ENCODE measurements at regions of chr1 and their contacts with region 1.

Region 1: GRCh38 chr1:226121587-226122400 is 59.3 kb downstream of the H3-3A start:
- DNase-seq: peak; percentile 65 to 87 (median 77)
- ATAC-seq: peak; percentile 82
- H3K4me3 ChIP-seq: peak overlapping the region; percentile 28
- H3K4me3 Mint-ChIP-seq: peak overlapping the region; percentile 68 to 94 (median 82)
- H3K27ac ChIP-seq: peak overlapping the region; percentile 75
- H3K27ac Mint-ChIP-seq: peak overlapping the region in 4 of 9 donors; percentile 51 to 95 (median 77)
- H3K4me1 ChIP-seq: peaks cover 9 to 12% of the 10 kb centered on the region in 2 donors
- H3K4me1 Mint-ChIP-seq: peaks cover 15 to 40% (median 27%) of the 10 kb centered on the region in 7 donors
- H3K27me3 ChIP-seq: no peaks in the 10 kb centered on the region
- H3K27me3 Mint-ChIP-seq: peaks cover 0 to 10% (median 0%) of the 10 kb centered on the region in 5 donors

Region 2: GRCh38 chr1:225467193-225468020 is 654.4 kb before region 1 on chr1:
- CTCF ChIA-PET with region 1: no interaction called
- POLR2A ChIA-PET with region 1: interaction called, 3 read pairs
- intact Hi-C with region 1: loop called in 1 of 2 experiments (anchors 5 kb)
- DNase-seq: peak; percentile 57 to 85 (median 81)
- ATAC-seq: peak; percentile 91
- H3K4me3 ChIP-seq: peak overlapping the region; percentile 94
- H3K4me3 Mint-ChIP-seq: peak overlapping the region; percentile 81 to 94 (median 92)
- H3K27ac ChIP-seq: peak overlapping the region; percentile 85
- H3K27ac Mint-ChIP-seq: peak overlapping the region; percentile 89 to 98 (median 98)
- H3K4me1 ChIP-seq: peaks cover 22 to 40% of the 10 kb centered on the region in 2 donors
- H3K4me1 Mint-ChIP-seq: peaks cover 33 to 65% (median 48%) of the 10 kb centered on the region in 7 donors
- H3K27me3 ChIP-seq: no peaks in the 10 kb centered on the region
- H3K27me3 Mint-ChIP-seq: no peaks in the 10 kb centered on the region

Region 3: DNA sequence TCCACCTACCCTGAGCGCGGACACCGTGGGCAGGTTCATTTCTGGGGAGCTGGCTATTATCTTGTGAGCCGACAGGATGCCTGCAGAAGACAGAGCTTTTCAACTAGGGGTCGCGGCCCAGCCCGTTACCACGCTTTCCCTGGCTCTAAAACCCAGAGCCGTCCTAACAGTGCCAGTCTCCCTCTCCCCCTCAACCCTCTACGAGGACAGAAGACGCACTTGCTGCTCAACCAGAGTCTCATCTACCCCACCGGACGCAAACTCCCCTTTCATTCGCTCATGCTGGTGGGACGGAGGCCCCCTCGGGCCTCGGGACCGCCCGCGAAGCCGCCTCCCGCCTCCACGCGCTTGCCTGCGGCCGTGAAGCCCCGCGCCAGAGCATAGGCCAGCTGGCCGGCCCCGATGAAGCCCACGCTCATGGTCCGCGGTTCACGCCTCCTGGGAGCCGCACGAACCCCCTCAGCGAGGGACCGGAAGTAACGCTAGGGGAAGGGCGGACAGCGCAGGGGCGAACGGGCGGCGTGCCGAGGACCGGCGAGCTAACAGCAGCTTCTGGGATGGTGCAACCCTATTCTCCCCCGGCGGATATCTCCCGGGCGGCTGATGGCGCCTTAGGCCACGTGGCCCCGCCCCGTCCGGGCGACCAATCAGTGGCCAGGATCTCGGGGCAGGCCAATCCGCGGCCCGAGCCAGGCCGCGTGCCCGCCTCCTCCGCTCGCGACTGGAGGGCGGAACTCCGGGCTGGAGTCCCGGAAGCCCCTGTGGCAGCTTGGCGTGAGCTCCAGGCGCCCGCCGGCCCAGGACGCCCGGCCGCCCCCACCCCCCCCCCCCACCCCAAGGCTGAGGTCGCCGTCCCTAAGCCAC is 197.9 kb before region 1 on chr1 and contains the start of gene PYCR2:
- CTCF ChIA-PET with region 1: no interaction called
- POLR2A ChIA-PET with region 1: no interaction called
- intact Hi-C with region 1: loop called in 1 of 2 experiments (anchors 10 kb)
- DNase-seq: peak; percentile 92 to 97 (median 94)
- ATAC-seq: peak; percentile 99
- H3K4me3 ChIP-seq: peak within 1 kb of the TSS; percentile 100
- H3K4me3 Mint-ChIP-seq: peak within 1 kb of the TSS; percentile 86 to 98 (median 94)
- H3K27ac ChIP-seq: peak within 1 kb of the TSS; percentile 95
- H3K27ac Mint-ChIP-seq: peak within 1 kb of the TSS; percentile 90 to 98 (median 95)
- H3K4me1 ChIP-seq: peaks cover 11 to 65% of the 10 kb centered on the region in 2 donors
- H3K4me1 Mint-ChIP-seq: peaks cover 45 to 75% (median 60%) of the 10 kb centered on the region in 7 donors
- H3K27me3 ChIP-seq: no peaks in the 10 kb centered on the region
- H3K27me3 Mint-ChIP-seq: no peaks in the 10 kb centered on the region
- total RNA-seq, gene PYCR2: 46.4 to 137 (median 109) TPM

Region 4: GRCh38 chr1:226109829-226110248 is 12.0 kb before region 1 on chr1:
- CTCF ChIA-PET with region 1: interaction called, 9 read pairs
- POLR2A ChIA-PET with region 1: interaction called, 4 read pairs
- intact Hi-C with region 1: loop called (anchors 1 kb)
- DNase-seq: peak; percentile 44 to 84 (median 59)
- ATAC-seq: peak; percentile 92
- H3K4me3 ChIP-seq: peak overlapping the region; percentile 59
- H3K4me3 Mint-ChIP-seq: peak overlapping the region; percentile 88 to 96 (median 92)
- H3K27ac ChIP-seq: peak overlapping the region; percentile 67
- H3K27ac Mint-ChIP-seq: peak overlapping the region; percentile 85 to 93 (median 89)
- H3K4me1 ChIP-seq: no peaks in the 10 kb centered on the region
- H3K4me1 Mint-ChIP-seq: peaks cover 7 to 26% (median 21%) of the 10 kb centered on the region in 7 donors
- H3K27me3 ChIP-seq: no peaks in the 10 kb centered on the region
- H3K27me3 Mint-ChIP-seq: peaks cover 0 to 6% (median 0%) of the 10 kb centered on the region in 5 donors

Region 5: DNA sequence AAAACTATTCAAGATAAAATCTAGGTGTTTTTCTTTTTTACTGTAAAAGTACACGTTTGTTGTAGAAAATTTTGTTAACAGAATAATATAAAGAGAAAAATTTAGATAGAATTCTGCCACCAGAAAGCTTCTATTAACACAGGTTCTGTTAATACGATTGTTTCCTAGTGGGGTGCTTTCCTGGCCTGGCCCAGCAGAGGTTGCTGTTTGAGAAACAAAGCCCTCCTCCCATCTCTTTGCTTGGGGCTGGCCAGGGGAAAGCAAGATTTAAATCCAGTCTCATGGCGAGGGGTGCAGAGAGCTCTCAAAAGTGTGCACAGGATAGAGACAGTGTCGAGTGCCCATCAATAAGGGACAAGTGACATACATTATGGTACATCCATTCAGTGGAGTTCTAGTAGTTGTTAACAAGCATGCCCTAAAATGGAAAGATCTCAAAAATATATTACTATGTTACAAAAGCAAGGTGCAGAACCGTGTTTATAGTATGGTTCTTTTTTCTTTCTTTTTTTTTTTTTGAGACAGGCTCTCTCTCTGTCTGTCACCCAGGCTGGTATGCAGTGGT is 79.3 kb after region 1 on chr1:
- CTCF ChIA-PET with region 1: interaction called, 89 read pairs
- POLR2A ChIA-PET with region 1: interaction called, 4 read pairs
- intact Hi-C with region 1: loop called (anchors 1 kb)
- DNase-seq: no peak
- ATAC-seq: no peak
- H3K4me3 ChIP-seq: no peak overlapping the region
- H3K4me3 Mint-ChIP-seq: no peak overlapping the region
- H3K27ac ChIP-seq: no peak overlapping the region
- H3K27ac Mint-ChIP-seq: no peak overlapping the region
- H3K4me1 ChIP-seq: no peaks in the 10 kb centered on the region
- H3K4me1 Mint-ChIP-seq: peaks cover 0 to 5% (median 0%) of the 10 kb centered on the region in 7 donors
- H3K27me3 ChIP-seq: no peaks in the 10 kb centered on the region
- H3K27me3 Mint-ChIP-seq: peaks cover 0 to 18% (median 4%) of the 10 kb centered on the region in 5 donors

Region 6: GRCh38 chr1:226407497-226408284 is 285.9 kb after region 1 on chr1 and contains the start of gene PARP1:
- CTCF ChIA-PET with region 1: interaction called, 6 read pairs
- POLR2A ChIA-PET with region 1: no interaction called
- intact Hi-C with region 1: loop called (anchors 2 kb)
- DNase-seq: peak; percentile 83 to 93 (median 89)
- ATAC-seq: peak; percentile 94
- H3K4me3 ChIP-seq: peak within 1 kb of the TSS; percentile 82
- H3K4me3 Mint-ChIP-seq: peak within 1 kb of the TSS; percentile 89 to 99 (median 94)
- H3K27ac ChIP-seq: peak within 1 kb of the TSS; percentile 74
- H3K27ac Mint-ChIP-seq: peak within 1 kb of the TSS; percentile 68 to 96 (median 93)
- H3K4me1 ChIP-seq: peaks cover 23 to 30% of the 10 kb centered on the region in 2 donors
- H3K4me1 Mint-ChIP-seq: peaks cover 37 to 46% (median 40%) of the 10 kb centered on the region in 7 donors
- H3K27me3 ChIP-seq: no peaks in the 10 kb centered on the region
- H3K27me3 Mint-ChIP-seq: peaks cover 0 to 3% (median 0%) of the 10 kb centered on the region in 5 donors
- total RNA-seq, gene PARP1: 63.6 to 165 (median 89.3) TPM